A549 (cell line): ENCODE measurements at regions of chr20 and their contacts with region 1.

Region 1: GRCh38 chr20:53773792-53774401 is 180.3 kb upstream of the ZNF217 start:
- DNase-seq: peak; percentile 91 to 94
- ATAC-seq: peak; percentile 87 to 95
- H3K4me3 ChIP-seq: no peak overlapping the region
- H3K27ac ChIP-seq: peak overlapping the region; percentile 92
- H3K4me1 ChIP-seq: peaks cover 52% of the 10 kb centered on the region
- CTCF ChIP-seq: no peak
- EP300 ChIP-seq: peak; percentile 71 to 81; a peak in 4 of 5 replicates
- POLR2A ChIP-seq: no peak
- RAD21 ChIP-seq: peak; percentile 31 to 54; a peak in 3 of 5 replicates

Region 2: GRCh38 chr20:53786445-53787267 is 12.8 kb after region 1 on chr20:
- CTCF ChIA-PET with region 1: interaction called, 31 read pairs
- POLR2A ChIA-PET with region 1: interaction called, 9 read pairs
- DNase-seq: peak in 1 of 2 experiments; percentile 77
- ATAC-seq: peak; percentile 67
- H3K4me3 ChIP-seq: no peak overlapping the region; the same call in 2 of the 3 replicates
- H3K27ac ChIP-seq: peak overlapping the region; percentile 78 to 89
- H3K4me1 ChIP-seq: peaks cover 60% of the 10 kb centered on the region
- CTCF ChIP-seq: no peak
- EP300 ChIP-seq: no peak
- POLR2A ChIP-seq: no peak
- RAD21 ChIP-seq: peak; percentile 42 to 45; a peak in 4 of 5 replicates

Region 3: DNA sequence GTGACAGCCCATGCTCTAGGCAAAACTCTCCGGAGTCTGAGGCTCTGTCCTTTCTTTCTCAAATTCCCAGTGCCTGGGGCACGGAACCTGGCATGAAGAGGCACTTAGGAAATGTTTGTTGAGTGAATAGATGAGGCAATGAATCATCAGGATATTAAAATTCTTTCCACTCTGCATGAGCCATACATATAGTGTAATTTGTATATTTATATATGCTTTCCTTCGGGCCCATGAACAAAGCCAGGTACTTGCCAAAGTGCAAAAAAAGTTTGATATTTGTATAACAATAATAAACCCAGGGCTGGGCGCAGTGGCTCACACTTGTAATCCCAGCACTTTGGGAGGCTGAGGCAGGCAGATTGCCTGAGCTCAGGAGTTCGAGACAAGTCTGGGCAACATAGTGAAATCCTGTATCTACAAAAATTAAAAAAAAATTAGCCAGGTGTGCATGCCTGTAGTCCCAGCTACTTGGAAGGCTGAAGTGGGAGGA is 32.0 kb after region 1 on chr20:
- CTCF ChIA-PET with region 1: interaction called, 6 read pairs
- POLR2A ChIA-PET with region 1: interaction called, 12 read pairs
- DNase-seq: peak; percentile 82 to 92
- ATAC-seq: peak; percentile 86 to 91
- H3K4me3 ChIP-seq: no peak overlapping the region
- H3K27ac ChIP-seq: peak overlapping the region; percentile 89 to 90
- H3K4me1 ChIP-seq: peaks cover 64% of the 10 kb centered on the region
- CTCF ChIP-seq: no peak
- EP300 ChIP-seq: peak; percentile 79 to 90; a peak in 3 of 5 replicates
- POLR2A ChIP-seq: no peak
- RAD21 ChIP-seq: peak; percentile 54 to 57; a peak in 3 of 5 replicates